Caco-2 (cell line): ENCODE measurements at regions of chr2 and their contacts with region 1.

Region 1: DNA sequence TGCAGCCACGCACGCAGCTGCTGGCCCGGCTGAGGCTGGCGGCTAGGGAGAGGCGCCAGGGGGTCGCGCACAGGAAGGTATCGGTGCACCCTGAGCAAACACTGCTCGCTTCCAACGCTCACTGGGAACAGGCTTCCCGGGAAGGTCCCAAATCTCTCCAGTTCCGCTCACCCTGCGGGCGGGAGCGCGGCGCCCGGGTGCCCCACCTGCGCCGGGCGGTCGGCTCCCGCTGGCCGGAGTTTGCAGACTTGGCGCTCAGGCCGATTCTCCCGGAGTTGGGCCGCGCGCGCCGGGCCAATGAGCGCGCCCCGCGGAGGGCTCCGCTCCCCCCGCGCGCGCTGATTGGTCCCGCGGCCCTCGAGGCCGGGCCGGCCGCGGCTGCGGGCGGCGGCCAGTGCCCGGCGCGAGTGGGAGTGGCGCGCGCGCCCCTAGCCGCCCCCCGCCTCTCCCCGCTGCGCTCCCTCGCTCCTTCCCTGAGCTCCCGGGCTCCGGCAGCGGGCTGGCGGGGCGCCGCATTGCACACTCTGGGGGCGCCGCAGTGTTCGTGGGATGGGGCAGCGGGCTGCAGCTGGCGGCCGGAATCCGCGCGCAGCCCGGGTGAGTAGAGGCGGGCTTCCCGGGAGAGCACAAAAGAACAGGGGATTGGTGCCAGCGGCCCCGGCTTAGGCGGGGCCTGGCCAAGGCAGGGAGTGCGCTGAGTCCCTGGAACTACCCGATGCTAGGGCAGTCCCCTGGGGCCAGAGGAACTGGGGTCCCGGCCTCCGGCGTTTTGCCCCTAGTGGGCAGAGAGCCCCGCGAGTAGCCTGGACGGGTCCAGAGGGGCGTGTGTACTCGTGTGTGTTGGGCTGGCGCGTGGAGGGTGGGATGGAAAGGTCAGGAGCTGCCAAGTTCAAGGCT is at the start of gene LYPD6:
- DNase-seq: peak; percentile 75 to 89
- H3K4me3 ChIP-seq: peak within 1 kb of the TSS; percentile 89
- H3K4me3 Mint-ChIP-seq: peak within 1 kb of the TSS; percentile 92
- H3K27ac Mint-ChIP-seq: peak within 1 kb of the TSS; percentile 72
- H3K4me1 ChIP-seq: no peaks in the 10 kb centered on the region; the same call in 1 of the 2 replicates
- H3K4me1 Mint-ChIP-seq: peaks cover 22% of the 10 kb centered on the region
- H3K27me3 ChIP-seq: no peaks in the 10 kb centered on the region
- H3K27me3 Mint-ChIP-seq: no peaks in the 10 kb centered on the region
- CTCF ChIP-seq: no peak
- total RNA-seq, gene LYPD6: 9.0 and 10.5 TPM in 2 replicates

Region 2: GRCh38 chr2:149487189-149487588 is 156.8 kb after region 1 on chr2:
- CTCF ChIA-PET with region 1: no interaction called
- POLR2A ChIA-PET with region 1: no interaction called
- intact Hi-C with region 1: loop called (anchors 5 kb)
- DNase-seq: no peak
- H3K4me3 ChIP-seq: no peak overlapping the region
- H3K4me3 Mint-ChIP-seq: no peak overlapping the region
- H3K27ac Mint-ChIP-seq: no peak overlapping the region
- H3K4me1 ChIP-seq: peaks cover 20% of the 10 kb centered on the region
- H3K4me1 Mint-ChIP-seq: no peaks in the 10 kb centered on the region
- H3K27me3 ChIP-seq: no peaks in the 10 kb centered on the region
- H3K27me3 Mint-ChIP-seq: no peaks in the 10 kb centered on the region
- CTCF ChIP-seq: no peak

Region 3: DNA sequence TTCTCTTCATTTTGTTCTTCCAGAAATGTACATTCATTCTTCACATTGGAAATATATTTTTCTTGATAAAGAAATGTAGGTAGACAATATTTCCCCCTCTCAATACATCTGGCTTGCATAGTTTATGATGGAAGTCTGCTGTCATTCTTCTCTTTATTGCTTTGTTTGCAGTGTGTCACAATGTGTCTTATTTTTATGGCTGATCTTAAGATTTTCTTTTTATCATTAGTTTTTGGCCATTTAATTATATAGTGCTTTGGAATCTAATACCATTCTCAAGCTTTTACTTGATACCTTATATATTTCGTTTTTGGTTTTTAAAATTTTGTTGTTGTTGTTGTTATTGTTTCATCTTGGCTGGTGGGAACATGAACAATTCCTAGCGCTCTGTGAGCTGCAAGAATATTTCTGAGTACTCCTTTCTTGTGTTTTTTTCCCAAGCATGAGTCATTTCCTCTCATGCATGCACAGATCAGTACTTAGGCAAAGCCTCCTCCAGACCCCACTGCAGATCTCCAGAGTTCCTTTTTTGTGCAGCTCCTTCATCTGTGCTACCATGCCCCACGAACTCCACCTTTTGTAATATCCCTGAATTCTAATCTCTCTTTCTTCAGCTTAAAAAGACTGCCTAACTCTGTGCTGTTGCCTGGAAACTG is 270.9 kb after region 1 on chr2:
- CTCF ChIA-PET with region 1: no interaction called
- POLR2A ChIA-PET with region 1: no interaction called
- intact Hi-C with region 1: no loop called
- DNase-seq: no peak
- H3K4me3 ChIP-seq: no peak overlapping the region
- H3K4me3 Mint-ChIP-seq: no peak overlapping the region
- H3K27ac Mint-ChIP-seq: no peak overlapping the region
- H3K4me1 ChIP-seq: peaks cover 12% of the 10 kb centered on the region; the same call in 1 of the 2 replicates
- H3K4me1 Mint-ChIP-seq: peaks cover 15% of the 10 kb centered on the region
- H3K27me3 ChIP-seq: no peaks in the 10 kb centered on the region
- H3K27me3 Mint-ChIP-seq: no peaks in the 10 kb centered on the region
- CTCF ChIP-seq: no peak